Mammary epithelial cell (primary cell): ENCODE measurements at regions of chr6 and their contacts with region 1.

Region 1: GRCh38 chr6:89667872-89668556 is 29.5 kb upstream of the LYRM2 start:
- DNase-seq: no peak
- H3K4me3 ChIP-seq: no peak overlapping the region
- H3K27ac ChIP-seq: no peak overlapping the region
- H3K4me1 ChIP-seq: no peaks in the 10 kb centered on the region
- H3K27me3 ChIP-seq: no peaks in the 10 kb centered on the region
- CTCF ChIP-seq: no peak

Region 2: DNA sequence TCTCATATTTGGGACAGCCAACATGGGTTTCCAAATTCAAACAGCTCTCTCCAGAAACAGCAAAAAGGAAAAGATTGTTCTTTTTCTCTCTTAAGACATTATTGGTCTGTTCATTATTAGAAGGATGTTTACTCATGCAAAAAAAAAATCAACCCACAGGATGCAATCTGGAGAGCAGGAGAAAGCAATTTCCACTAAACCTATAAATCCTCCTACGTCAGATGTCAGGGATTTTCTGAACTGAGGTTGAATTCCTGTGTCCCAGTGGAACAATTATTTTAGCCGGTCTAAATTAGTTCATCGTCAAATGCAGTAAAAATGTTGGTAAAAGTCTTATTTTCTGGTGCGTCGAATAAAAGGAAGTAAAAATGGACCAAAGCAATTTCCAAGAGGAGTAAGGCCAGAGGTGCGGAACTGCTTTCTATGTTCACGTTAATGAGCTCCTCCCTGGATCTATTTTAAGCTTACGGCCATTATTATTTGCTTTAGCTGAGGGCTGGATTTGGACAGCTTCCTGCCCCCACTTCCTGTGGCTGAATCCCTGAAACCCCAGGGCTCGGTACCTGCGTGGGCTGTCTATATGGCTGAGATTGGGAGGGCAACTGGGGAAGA is 450.6 kb before region 1 on chr6 and contains the start of gene GABRR1:
- CTCF ChIA-PET with region 1: no interaction called
- dilution Hi-C with region 1: no loop called
- in situ Hi-C with region 1: no loop called
- intact Hi-C with region 1: no loop called
- DNase-seq: no peak
- H3K4me3 ChIP-seq: no peak within 1 kb of the TSS
- H3K27ac ChIP-seq: no peak within 1 kb of the TSS
- H3K4me1 ChIP-seq: peaks cover 3% of the 10 kb centered on the region
- H3K27me3 ChIP-seq: no peaks in the 10 kb centered on the region
- CTCF ChIP-seq: no peak
- total RNA-seq, gene GABRR1: not detected

Region 3: GRCh38 chr6:89703292-89703691 is 35.3 kb after region 1 on chr6:
- CTCF ChIA-PET with region 1: no interaction called
- dilution Hi-C with region 1: loop called (anchors 5 kb)
- in situ Hi-C with region 1: no loop called
- intact Hi-C with region 1: no loop called
- DNase-seq: no peak
- H3K4me3 ChIP-seq: no peak overlapping the region
- H3K27ac ChIP-seq: no peak overlapping the region
- H3K4me1 ChIP-seq: peaks cover 7% of the 10 kb centered on the region
- H3K27me3 ChIP-seq: no peaks in the 10 kb centered on the region
- CTCF ChIP-seq: no peak